CD4-positive, alpha-beta T cell (primary cell): ENCODE measurements at regions of chr12 and their contacts with region 1.

Region 1: GRCh38 chr12:8949342-8950220 is at the start of gene M6PR:
- DNase-seq: peak; percentile 78 to 95 (median 84)
- ATAC-seq: peak; percentile 71
- H3K4me3 ChIP-seq: peak within 1 kb of the TSS; percentile 79
- H3K4me3 Mint-ChIP-seq: peak within 1 kb of the TSS; percentile 91
- H3K27ac ChIP-seq: peak within 1 kb of the TSS; percentile 95 to 99
- H3K27ac Mint-ChIP-seq: peak within 1 kb of the TSS; percentile 93
- H3K4me1 ChIP-seq: peaks cover 43% of the 10 kb centered on the region
- H3K4me1 Mint-ChIP-seq: peaks cover 72% of the 10 kb centered on the region
- H3K27me3 ChIP-seq: no peaks in the 10 kb centered on the region
- H3K27me3 Mint-ChIP-seq: no peaks in the 10 kb centered on the region
- CTCF ChIP-seq: peak; percentile 67
- total RNA-seq, gene M6PR: 53.4 to 55.8 TPM

Region 2: GRCh38 chr12:8644345-8645248 is 305.0 kb before region 1 on chr12:
- CTCF ChIA-PET with region 1: no interaction called
- POLR2A ChIA-PET with region 1: interaction called, 16 read pairs
- intact Hi-C with region 1: no loop called
- DNase-seq: peak in 13 of 14 experiments; percentile 7 to 80 (median 29)
- ATAC-seq: peak; percentile 91
- H3K4me3 ChIP-seq: peak overlapping the region; percentile 11
- H3K4me3 Mint-ChIP-seq: peak overlapping the region; percentile 72
- H3K27ac ChIP-seq: peak overlapping the region; percentile 17 to 85
- H3K27ac Mint-ChIP-seq: peak overlapping the region; percentile 87
- H3K4me1 ChIP-seq: peaks cover 19% of the 10 kb centered on the region
- H3K4me1 Mint-ChIP-seq: peaks cover 39% of the 10 kb centered on the region
- H3K27me3 ChIP-seq: no peaks in the 10 kb centered on the region
- H3K27me3 Mint-ChIP-seq: no peaks in the 10 kb centered on the region
- CTCF ChIP-seq: no peak

Region 3: GRCh38 chr12:8890313-8891085 is 59.1 kb before region 1 on chr12:
- CTCF ChIA-PET with region 1: interaction called, 14 read pairs
- POLR2A ChIA-PET with region 1: interaction called, 3 read pairs
- intact Hi-C with region 1: no loop called
- DNase-seq: peak; percentile 38 to 81 (median 52)
- ATAC-seq: peak; percentile 88
- H3K4me3 ChIP-seq: peak overlapping the region; percentile 57
- H3K4me3 Mint-ChIP-seq: peak overlapping the region; percentile 92
- H3K27ac ChIP-seq: no peak overlapping the region
- H3K27ac Mint-ChIP-seq: peak overlapping the region; percentile 29
- H3K4me1 ChIP-seq: peaks cover 3% of the 10 kb centered on the region
- H3K4me1 Mint-ChIP-seq: peaks cover 5% of the 10 kb centered on the region
- H3K27me3 ChIP-seq: no peaks in the 10 kb centered on the region
- H3K27me3 Mint-ChIP-seq: no peaks in the 10 kb centered on the region
- CTCF ChIP-seq: peak; percentile 93

Region 4: DNA sequence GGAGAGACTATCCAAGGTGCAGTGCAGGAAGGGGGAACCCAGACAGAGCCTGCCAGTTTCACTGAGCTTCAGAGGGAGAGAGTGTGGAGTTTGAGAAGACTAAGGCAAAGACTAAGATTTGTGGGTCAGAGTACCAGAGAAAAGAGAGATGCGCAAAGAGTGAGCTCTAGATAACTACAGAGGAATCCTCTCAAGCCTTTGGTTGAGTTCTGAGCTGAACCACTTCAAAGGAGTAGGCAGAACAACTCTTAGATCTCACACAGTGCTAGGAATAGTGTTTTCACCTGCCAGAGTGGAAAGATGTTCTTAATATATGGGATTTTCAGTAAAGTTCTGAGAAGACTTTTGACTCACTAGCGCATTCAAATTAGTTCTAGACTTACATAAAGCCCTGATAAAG is 10.6 kb after region 1 on chr12:
- CTCF ChIA-PET with region 1: interaction called, 5 read pairs
- POLR2A ChIA-PET with region 1: interaction called, 32 read pairs
- intact Hi-C with region 1: no loop called
- DNase-seq: peak in 3 of 14 experiments; percentile 40 to 70 (median 67)
- ATAC-seq: peak; percentile 97
- H3K4me3 ChIP-seq: no peak overlapping the region
- H3K4me3 Mint-ChIP-seq: peak overlapping the region; percentile 65
- H3K27ac ChIP-seq: peak overlapping the region; percentile 47
- H3K27ac Mint-ChIP-seq: peak overlapping the region; percentile 93
- H3K4me1 ChIP-seq: peaks cover 60% of the 10 kb centered on the region
- H3K4me1 Mint-ChIP-seq: peaks cover 74% of the 10 kb centered on the region
- H3K27me3 ChIP-seq: no peaks in the 10 kb centered on the region
- H3K27me3 Mint-ChIP-seq: no peaks in the 10 kb centered on the region
- CTCF ChIP-seq: no peak

Region 5: DNA sequence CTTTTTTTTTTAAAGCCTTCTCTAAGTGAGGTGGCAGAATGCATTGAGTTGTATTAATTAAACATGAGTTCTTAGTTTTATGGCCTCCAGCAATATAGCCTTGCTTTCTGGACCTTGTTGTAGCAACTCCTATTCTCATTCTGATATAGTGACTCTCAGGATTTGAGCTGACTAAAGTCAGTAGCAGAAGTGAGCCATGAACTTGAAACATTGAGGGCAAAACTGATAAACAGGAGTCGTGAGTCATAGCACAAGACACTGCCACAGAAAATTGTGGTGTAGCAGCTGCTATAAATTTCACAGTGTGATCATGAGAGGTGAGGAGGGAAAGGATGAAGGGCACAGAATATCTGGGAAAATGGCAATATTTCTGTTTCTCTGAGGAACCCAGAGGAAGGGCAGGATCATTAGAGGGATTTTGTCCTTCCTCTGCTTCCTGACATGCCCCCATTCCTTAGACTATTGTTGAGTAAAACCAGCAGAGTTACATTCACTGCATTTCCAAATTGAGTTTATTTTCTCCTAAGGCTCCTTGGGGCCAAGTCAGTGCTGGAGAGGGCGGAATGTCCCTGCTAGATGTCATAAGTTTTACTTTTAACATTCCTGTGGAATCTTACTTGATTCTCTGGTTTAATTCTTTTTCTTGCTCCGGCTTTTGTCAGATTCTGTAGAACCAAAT is 47.2 kb after region 1 on chr12:
- CTCF ChIA-PET with region 1: interaction called, 8 read pairs
- POLR2A ChIA-PET with region 1: interaction called, 13 read pairs
- intact Hi-C with region 1: loop called in 1 of 2 experiments (anchors 2 kb)
- DNase-seq: peak in 6 of 14 experiments; percentile 4 to 54 (median 43)
- ATAC-seq: peak; percentile 68
- H3K4me3 ChIP-seq: no peak overlapping the region
- H3K4me3 Mint-ChIP-seq: peak overlapping the region; percentile 11
- H3K27ac ChIP-seq: peak overlapping the region in 1 of 2 donors; percentile 6
- H3K27ac Mint-ChIP-seq: peak overlapping the region; percentile 65
- H3K4me1 ChIP-seq: peaks cover 63% of the 10 kb centered on the region
- H3K4me1 Mint-ChIP-seq: peaks cover 73% of the 10 kb centered on the region
- H3K27me3 ChIP-seq: no peaks in the 10 kb centered on the region
- H3K27me3 Mint-ChIP-seq: no peaks in the 10 kb centered on the region
- CTCF ChIP-seq: no peak

Region 6: DNA sequence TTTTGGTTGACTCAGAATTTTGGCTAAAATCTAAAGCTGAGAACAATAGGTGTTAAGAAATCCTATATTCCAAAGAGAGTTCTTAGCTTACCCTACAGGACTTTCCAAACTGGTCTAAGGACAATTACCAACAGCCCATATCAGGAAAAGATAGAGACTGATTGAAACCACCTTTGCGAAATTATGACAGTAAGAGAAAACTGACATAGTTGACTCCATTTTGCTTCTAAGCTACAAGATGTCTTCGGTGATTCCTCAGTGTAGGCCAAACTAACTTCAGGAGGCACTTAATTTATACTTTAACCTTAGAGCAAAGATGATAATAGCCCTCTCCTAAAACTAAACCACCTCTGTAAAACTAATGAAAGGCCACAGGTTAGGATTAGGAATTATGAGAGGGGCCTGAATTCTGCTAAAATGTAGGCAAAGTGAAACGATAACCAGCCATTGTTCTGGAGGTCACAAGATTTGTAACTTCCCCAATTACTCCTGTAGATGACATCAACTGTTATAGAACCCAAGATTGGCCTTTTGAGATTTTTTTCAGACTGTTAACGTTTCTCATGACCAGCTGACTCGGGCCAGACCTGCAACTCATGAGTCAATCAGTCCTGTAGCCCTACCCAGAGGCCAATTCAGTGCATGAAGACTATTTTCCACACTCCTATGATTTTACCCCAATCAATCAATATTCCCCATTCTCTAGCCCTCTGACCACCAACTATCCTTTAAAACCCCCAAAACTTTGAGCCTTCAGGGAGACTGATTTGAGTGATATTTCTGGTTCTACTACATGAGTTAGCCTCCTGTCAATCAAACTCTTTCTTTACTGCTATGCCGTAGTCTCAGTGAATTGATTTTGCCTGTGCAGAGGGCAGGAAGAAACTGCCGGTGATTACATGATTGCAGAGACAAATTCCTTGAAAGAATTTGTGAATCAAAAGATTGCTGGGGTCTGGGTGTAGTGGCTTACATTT is 82.9 kb after region 1 on chr12:
- CTCF ChIA-PET with region 1: interaction called, 57 read pairs
- POLR2A ChIA-PET with region 1: interaction called, 71 read pairs
- intact Hi-C with region 1: loop called in 1 of 2 experiments (anchors 1 kb)
- DNase-seq: peak in 1 of 14 experiments; percentile 46
- ATAC-seq: no peak
- H3K4me3 ChIP-seq: no peak overlapping the region
- H3K4me3 Mint-ChIP-seq: peak overlapping the region; percentile 49
- H3K27ac ChIP-seq: no peak overlapping the region
- H3K27ac Mint-ChIP-seq: peak overlapping the region; percentile 25
- H3K4me1 ChIP-seq: peaks cover 63% of the 10 kb centered on the region
- H3K4me1 Mint-ChIP-seq: peaks cover 69% of the 10 kb centered on the region
- H3K27me3 ChIP-seq: no peaks in the 10 kb centered on the region
- H3K27me3 Mint-ChIP-seq: no peaks in the 10 kb centered on the region
- CTCF ChIP-seq: no peak

Region 7: GRCh38 chr12:9732921-9733461 is 783.4 kb after region 1 on chr12 and contains the start of gene CLECL1:
- CTCF ChIA-PET with region 1: no interaction called
- POLR2A ChIA-PET with region 1: no interaction called
- intact Hi-C with region 1: no loop called
- DNase-seq: peak in 1 of 14 experiments; percentile 46
- ATAC-seq: no peak
- H3K4me3 ChIP-seq: peak within 1 kb of the TSS; percentile 31
- H3K4me3 Mint-ChIP-seq: peak within 1 kb of the TSS; percentile 57
- H3K27ac ChIP-seq: no peak within 1 kb of the TSS
- H3K27ac Mint-ChIP-seq: peak within 1 kb of the TSS; percentile 35
- H3K4me1 ChIP-seq: peaks cover 1% of the 10 kb centered on the region
- H3K4me1 Mint-ChIP-seq: peaks cover 38% of the 10 kb centered on the region
- H3K27me3 ChIP-seq: no peaks in the 10 kb centered on the region
- H3K27me3 Mint-ChIP-seq: no peaks in the 10 kb centered on the region
- CTCF ChIP-seq: no peak
- total RNA-seq, gene CLECL1: 0.44 to 1.7 TPM